GM12878 (cell line): ENCODE measurements at regions of chr2 and their contacts with region 1.

Region 1: GRCh38 chr2:199186301-199186751 is 271.4 kb downstream of the SATB2 start:
- DNase-seq: no peak
- ATAC-seq: peak; percentile 68
- H3K4me3 ChIP-seq: no peak overlapping the region
- H3K27ac ChIP-seq: no peak overlapping the region
- H3K4me1 ChIP-seq: no peaks in the 10 kb centered on the region
- H3K27me3 ChIP-seq: no peaks in the 10 kb centered on the region
- CTCF ChIP-seq: no peak
- EP300 ChIP-seq: no peak
- POLR2A ChIP-seq: no peak
- RAD21 ChIP-seq: no peak

Region 2: GRCh38 chr2:199197448-199197847 is 11.1 kb after region 1 on chr2:
- CTCF ChIA-PET with region 1: interaction called, 4 read pairs
- POLR2A ChIA-PET with region 1: interaction called, 8 read pairs
- RAD21 ChIA-PET with region 1: interaction called, 4 read pairs
- SMC1A ChIA-PET with region 1: interaction called, 11 read pairs
- in situ Hi-C with region 1: no loop called
- intact Hi-C with region 1: no loop called
- DNase-seq: peak; percentile 19
- ATAC-seq: peak; percentile 65
- H3K4me3 ChIP-seq: no peak overlapping the region
- H3K27ac ChIP-seq: no peak overlapping the region
- H3K4me1 ChIP-seq: no peaks in the 10 kb centered on the region
- H3K27me3 ChIP-seq: no peaks in the 10 kb centered on the region
- CTCF ChIP-seq: no peak
- EP300 ChIP-seq: no peak
- POLR2A ChIP-seq: no peak
- RAD21 ChIP-seq: no peak